ENCODE measurements at regions of chr9 and their contacts with region 1.

Region 1: DNA sequence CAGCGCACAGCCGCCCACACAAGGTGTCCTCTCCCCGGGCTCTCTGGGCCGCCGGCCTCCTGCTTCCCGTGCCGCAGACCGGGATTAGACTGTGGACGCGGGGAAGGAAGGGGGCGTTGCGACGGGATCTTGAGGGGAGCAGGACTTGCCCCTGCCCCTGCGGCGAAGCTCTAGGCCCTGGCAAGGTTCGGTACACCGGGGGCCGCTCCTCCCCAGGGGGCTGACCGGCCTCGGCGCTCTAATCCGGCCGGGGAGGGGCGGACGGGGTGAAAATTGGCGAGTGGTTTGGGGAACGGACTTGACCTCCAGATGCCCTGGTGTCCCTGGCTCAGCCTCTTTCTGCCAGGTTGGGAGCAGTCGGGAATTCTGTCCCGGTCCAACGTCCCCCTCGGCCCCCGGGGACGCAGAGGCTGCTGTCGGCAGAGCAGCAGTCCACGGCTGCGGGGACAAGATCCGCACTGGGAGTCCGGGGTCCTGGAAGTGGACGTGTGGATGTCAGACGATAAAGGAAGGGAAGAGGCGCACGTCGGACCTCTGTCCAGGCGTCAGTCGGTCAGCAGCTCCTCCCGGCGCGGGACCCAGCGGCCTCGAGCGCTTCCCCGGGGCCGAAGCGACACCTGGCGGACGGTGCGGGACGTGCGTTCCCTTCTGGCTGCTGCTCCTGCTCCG is 1.9 kb upstream of the CNTFR start:
- DNase-seq: peak; percentile 77 to 86
- ATAC-seq: peak; percentile 83 to 89 (median 87)
- H3K4me3 ChIP-seq: peak overlapping the region; percentile 20
- H3K4me3 Mint-ChIP-seq: peak overlapping the region; percentile 55
- H3K27ac ChIP-seq: no peak overlapping the region
- H3K27ac Mint-ChIP-seq: no peak overlapping the region
- H3K4me1 ChIP-seq: peaks cover 28% of the 10 kb centered on the region
- H3K4me1 Mint-ChIP-seq: peaks cover 9 to 41% of the 10 kb centered on the region in 2 donors
- H3K27me3 ChIP-seq: peaks cover 40% of the 10 kb centered on the region
- H3K27me3 Mint-ChIP-seq: peaks cover 54 to 68% of the 10 kb centered on the region in 2 donors
- CTCF ChIP-seq: peak; percentile 86

Region 2: DNA sequence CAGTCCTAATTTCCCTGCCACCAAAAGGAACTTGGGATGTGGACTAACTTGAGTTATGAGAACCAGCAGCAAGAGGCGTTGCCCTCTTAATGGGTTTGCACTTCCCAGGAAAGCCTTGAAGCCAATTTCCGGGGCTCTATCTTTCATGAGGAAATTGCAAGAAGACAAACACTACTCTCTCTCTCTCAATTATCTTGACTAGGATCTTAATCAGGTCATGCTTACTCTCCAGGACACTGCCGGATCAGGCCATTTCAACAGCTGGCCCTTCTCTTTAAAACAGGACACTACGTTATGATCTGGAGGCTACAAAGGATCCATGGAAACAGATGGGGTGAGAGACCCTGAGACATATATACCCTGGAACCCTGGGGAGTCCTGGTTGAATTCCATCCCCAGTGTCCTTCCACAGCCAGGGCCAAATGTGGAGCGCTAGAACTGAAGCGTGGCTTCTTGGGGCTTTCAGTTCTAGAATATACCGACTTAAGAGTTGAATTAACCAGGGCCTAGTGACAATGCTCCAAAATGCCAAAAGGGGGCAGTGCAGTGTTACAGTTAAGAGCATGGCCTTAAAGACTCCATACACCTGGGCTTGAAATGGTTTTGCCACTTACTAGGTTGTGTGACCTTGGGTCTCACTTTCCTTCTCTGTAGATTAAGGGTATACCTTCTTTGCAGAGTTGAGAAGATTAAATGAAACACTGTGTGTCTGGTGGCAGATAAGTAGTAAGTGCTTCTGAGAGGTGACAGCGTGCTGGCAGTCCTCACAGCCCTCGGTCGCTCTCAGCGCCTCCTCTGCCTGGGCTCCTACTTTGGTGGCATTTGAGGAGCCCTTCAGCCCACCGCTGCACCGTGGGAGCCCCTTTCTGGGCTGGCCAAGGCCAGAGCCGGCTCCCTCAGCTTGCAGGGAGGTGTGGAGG is 154.1 kb before region 1 on chr9:
- intact Hi-C with region 1: loop called (anchors 5 kb)
- DNase-seq: peak; percentile 27 to 88
- ATAC-seq: peak; percentile 89 to 93 (median 92)
- H3K4me3 ChIP-seq: no peak overlapping the region
- H3K4me3 Mint-ChIP-seq: no peak overlapping the region
- H3K27ac ChIP-seq: no peak overlapping the region
- H3K27ac Mint-ChIP-seq: no peak overlapping the region
- H3K4me1 ChIP-seq: peaks cover 3% of the 10 kb centered on the region
- H3K4me1 Mint-ChIP-seq: peaks cover 7 to 12% of the 10 kb centered on the region in 2 donors
- H3K27me3 ChIP-seq: no peaks in the 10 kb centered on the region
- H3K27me3 Mint-ChIP-seq: no peaks in the 10 kb centered on the region
- CTCF ChIP-seq: peak; percentile 73

Region 3: GRCh38 chr9:34825775-34826174 is 234.4 kb after region 1 on chr9:
- intact Hi-C with region 1: no loop called
- DNase-seq: no peak
- ATAC-seq: no peak
- H3K4me3 ChIP-seq: no peak overlapping the region
- H3K4me3 Mint-ChIP-seq: no peak overlapping the region
- H3K27ac ChIP-seq: no peak overlapping the region
- H3K27ac Mint-ChIP-seq: no peak overlapping the region
- H3K4me1 ChIP-seq: no peaks in the 10 kb centered on the region
- H3K4me1 Mint-ChIP-seq: no peaks in the 10 kb centered on the region
- H3K27me3 ChIP-seq: no peaks in the 10 kb centered on the region
- H3K27me3 Mint-ChIP-seq: peaks cover 2 to 9% of the 10 kb centered on the region in 2 donors
- CTCF ChIP-seq: no peak

Measured in natural killer cell (primary cell).